Sciatic nerve (tissue), 2 donors: ENCODE measurements at regions of chr16 and their contacts with region 1.

Region 1: DNA sequence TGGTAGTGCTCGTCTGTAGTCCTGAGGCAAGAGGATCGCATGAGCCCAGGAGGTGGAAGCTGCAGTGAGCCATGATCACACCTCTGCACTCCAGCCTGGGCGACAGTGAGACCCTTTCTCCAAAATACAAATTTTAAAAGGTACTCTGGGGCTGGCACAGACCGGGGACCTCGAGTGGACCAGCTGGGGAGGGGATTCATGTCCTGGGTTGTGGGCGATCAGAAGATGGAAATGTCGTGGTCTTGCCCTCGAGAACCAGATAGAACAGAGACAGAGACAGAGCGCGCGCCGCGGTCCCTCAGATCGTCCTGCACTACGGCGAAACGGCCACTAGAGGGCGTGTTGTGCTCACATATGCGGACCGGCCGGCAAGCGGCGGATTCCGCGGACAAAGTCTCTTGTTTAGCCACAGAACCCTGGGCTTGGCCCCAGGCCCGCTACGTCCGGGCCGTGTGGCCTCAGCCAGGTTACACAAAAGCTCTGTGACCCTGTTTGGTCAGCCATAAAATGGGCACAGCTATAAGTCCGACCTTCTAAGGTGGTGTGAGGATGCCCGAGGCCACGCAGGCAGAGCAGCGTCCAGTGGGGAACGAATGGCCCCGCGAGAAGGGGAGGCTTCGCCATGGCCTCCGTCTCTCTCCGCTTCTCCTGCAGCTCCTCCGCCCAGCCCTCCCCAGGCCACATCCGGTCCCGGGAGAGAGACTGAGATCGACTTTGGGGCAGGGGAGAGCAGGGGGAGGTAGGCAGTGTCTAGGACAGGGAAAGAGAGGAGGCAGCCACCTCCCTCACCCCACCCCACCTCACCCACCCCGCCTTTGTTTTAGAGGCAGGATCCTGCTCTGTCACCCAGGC is 14.6 kb upstream of the SBK1 start:
- DNase-seq: peak; percentile 93
- ATAC-seq: peak; percentile 95

Region 2: DNA sequence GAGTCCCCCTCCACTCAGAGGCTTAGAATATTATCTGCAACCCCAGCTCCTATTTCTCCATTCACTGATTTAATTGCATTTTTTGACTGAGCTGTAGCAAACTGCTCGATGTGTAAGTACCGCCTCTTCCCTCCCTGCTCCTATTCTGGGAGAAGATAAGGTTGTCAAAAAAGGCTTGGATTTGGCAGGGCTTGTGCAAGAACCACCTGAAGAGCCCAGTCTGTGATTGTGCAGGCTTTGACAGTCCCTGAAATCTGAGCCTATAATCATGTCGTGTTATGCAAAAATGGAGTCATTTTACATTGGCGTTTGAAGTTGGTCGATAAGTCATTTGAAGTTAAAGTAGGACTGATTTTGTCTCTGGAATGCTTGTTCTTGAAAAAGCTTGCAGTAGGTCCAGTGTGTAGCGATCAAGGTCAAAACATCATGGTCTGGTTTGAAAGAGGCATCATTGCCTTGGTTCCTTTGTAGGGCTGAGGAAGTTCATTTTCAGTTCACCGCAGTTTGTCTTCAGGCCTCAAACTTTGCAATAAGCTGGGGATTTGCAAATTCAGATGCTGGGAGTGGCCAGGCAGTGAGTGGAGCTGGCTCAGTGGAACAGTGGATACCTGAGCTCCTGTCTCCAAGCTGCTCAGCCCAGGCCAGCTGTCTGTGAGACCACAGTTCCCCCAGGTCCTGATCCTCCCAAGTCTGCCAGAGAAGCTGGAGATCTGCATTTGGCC is 659.0 kb before region 1 on chr16:
- intact Hi-C with region 1: no loop called
- DNase-seq: no peak
- ATAC-seq: peak; percentile 56

Region 3: DNA sequence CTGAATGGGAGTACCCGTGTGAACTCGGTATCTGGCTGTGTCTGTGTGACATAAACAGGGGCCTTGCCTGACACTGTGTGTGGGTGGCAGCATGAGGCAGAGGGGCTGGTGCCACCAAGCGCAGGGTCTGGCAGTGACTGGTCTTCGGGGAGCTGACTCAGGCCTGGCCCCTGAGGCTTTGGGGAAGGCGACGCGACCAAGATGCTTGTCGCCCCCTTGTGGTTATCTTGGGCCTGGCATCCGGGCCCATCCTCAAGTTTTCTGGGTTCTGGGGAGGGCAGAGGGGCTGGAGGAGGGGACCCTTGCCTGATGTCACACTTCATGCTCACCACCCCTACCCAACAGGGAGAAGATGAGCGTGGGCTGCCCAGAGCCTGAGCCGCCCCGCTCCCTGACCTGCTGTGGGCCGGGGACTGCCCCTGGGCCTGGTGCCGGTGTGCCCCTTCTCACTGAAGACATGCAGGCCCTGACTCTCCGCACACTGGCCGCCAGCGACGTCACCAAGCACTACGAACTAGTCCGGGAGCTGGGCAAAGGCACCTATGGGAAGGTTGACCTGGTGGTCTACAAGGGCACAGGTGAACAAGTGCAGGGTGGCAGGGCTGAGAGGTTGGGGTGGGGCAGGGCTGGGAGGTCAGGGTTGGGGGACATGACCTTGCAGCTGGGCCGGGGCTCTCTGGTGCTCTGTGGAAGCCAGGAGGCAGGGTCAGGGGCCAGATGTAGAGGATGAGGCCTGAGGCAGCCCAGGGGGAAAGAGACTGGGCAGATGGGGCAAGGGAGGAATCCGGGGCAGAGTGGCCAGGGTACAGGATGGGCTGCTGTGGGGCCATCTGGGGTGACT is 39.5 kb after region 1 on chr16:
- intact Hi-C with region 1: loop called (anchors 5 kb)
- DNase-seq: no peak
- ATAC-seq: peak; percentile 49